ENCODE measurements at regions of chr10 and their contacts with region 1.

Region 1: DNA sequence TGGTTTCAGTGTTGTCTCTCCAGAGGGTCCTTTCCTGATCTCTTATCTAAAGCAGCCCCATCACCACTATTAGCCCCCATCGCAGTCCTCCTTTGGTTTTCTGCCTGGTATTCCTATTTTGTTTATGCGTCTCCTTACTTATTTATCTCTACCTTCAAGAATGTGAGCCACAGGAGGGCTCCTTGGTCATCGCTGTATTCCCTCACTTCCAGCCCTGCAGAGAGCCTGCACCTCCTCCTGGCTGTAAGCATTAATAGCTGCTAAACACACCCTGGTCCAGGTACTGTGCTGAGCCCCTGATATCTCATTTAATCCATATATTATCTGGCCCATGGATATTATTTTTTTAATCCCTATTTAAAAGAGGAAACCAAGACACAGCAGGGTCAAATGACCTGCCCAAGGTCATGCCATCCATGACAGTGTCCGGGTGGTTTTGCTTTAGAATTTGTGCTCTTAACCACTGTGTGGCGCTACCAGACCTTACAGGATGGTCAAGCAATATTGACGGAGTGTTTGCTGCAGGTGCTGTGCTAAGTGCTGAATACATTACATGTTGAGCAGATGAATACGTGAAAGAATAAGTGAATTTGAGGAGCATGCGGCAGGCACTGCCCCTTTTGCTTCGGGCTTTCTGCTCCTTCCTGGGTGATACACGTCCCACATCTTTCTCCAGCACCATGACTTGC is 227.2 kb downstream of the ADAM12 start:
- H3K4me3 ChIP-seq: no peak overlapping the region
- H3K27ac ChIP-seq: no peak overlapping the region
- H3K4me1 ChIP-seq: no peaks in the 10 kb centered on the region
- CTCF ChIP-seq: peak; percentile 70

Region 2: GRCh38 chr10:126148227-126148587 is 12.9 kb before region 1 on chr10:
- CTCF ChIA-PET with region 1: interaction called, 11 read pairs
- POLR2A ChIA-PET with region 1: no interaction called
- H3K4me3 ChIP-seq: no peak overlapping the region
- H3K27ac ChIP-seq: no peak overlapping the region
- H3K4me1 ChIP-seq: no peaks in the 10 kb centered on the region
- CTCF ChIP-seq: no peak

Region 3: GRCh38 chr10:126504063-126504739 is 343.1 kb after region 1 on chr10:
- CTCF ChIA-PET with region 1: interaction called, 19 read pairs
- POLR2A ChIA-PET with region 1: interaction called, 4 read pairs
- H3K4me3 ChIP-seq: no peak overlapping the region
- H3K27ac ChIP-seq: no peak overlapping the region
- H3K4me1 ChIP-seq: no peaks in the 10 kb centered on the region
- CTCF ChIP-seq: no peak